CD8-positive, alpha-beta T cell (primary cell): ENCODE measurements at regions of chr4 and their contacts with region 1.

Region 1: DNA sequence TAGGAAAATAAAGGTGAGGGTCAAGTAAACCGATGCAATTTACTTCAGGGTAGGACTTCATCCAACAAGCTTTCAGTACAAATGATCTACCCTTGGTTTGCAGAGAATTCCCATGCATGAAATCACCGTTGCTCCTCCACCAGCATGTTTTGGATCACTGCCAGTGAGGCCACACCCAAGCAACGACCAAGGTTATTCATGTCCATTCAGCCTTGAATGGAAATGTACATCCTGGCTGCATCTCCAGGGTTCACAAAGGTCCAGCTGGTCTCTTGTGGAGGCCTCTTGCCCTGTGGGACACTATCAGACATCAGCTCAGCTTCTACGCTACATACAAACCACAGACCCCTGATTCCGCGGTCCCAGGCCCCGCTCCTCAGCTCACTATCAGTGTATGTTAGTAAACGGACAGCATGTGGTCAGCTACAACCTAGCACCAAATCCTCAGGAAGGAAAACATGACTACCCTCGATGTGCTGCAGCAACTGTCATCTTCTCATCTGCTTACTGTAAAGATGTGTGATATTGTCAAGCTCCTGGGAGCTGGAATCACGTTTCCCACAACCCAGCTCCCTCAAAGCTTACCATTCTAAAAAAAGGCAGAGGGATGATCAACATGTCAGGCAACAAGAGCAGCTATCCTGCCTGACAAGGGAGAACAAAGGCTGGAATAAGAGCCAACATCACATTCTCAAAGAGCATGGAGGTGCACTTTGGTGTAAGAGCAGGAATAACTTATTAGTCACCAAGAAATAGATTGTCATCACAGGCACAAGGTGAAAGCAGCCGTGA is 4.9 kb downstream of the LYAR start:
- DNase-seq: no peak
- ATAC-seq: no peak
- H3K4me3 ChIP-seq: no peak overlapping the region
- H3K4me3 Mint-ChIP-seq: no peak overlapping the region
- H3K27ac ChIP-seq: no peak overlapping the region
- H3K27ac Mint-ChIP-seq: no peak overlapping the region
- H3K4me1 ChIP-seq: peaks cover 19% of the 10 kb centered on the region
- H3K4me1 Mint-ChIP-seq: peaks cover 55% of the 10 kb centered on the region
- H3K27me3 ChIP-seq: no peaks in the 10 kb centered on the region
- H3K27me3 Mint-ChIP-seq: no peaks in the 10 kb centered on the region
- CTCF ChIP-seq: no peak

Region 2: DNA sequence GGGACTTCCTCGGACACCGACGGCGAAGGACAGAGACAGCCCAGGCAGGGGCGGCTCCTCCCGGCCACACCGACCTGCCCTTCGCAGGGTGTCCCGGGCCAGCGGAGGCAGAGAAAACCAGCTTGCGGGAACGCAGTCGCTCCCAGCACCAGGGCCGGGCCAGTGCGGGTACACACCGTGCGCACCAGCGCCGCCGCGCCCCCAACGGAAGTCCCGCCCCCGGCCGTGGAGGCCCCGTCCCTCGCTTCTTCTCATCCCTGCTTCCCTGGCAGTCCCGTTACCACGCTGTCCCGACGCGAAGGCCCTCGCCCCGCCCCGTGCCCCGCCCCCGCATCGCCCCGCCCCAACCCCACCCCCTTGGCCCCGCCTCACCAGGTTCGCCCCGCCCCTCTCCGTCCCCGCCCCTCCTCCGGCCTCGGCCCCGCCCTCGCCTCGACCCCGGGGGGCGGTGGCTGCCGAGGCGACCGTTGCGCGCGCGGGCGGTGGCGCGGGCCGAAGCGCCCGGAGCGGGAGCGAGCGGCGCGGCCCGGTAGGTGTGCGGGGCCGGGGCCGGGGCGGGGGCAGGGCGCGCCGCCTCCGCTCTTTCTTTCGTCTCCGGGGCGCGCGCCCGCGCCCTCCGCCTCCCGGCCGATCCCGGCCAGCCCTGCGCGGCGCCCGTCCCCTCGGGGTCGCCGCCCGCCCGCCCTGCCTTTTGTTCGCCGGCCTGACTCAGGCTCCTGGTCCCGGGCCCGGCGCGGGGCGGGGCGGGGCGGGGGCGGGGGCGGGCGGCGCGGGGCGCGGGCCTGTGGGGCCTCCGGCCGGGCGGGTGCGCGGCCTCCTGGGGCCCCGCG is 992.2 kb before region 1 on chr4 and contains the start of gene RGS12:
- CTCF ChIA-PET with region 1: no interaction called
- POLR2A ChIA-PET with region 1: no interaction called
- intact Hi-C with region 1: no loop called
- DNase-seq: peak; percentile 58 to 89 (median 78)
- ATAC-seq: peak; percentile 82
- H3K4me3 ChIP-seq: peak within 1 kb of the TSS; percentile 67 to 79
- H3K4me3 Mint-ChIP-seq: peak within 1 kb of the TSS; percentile 89
- H3K27ac ChIP-seq: no peak within 1 kb of the TSS
- H3K27ac Mint-ChIP-seq: peak within 1 kb of the TSS; percentile 82
- H3K4me1 ChIP-seq: peaks cover 14% of the 10 kb centered on the region
- H3K4me1 Mint-ChIP-seq: peaks cover 18% of the 10 kb centered on the region
- H3K27me3 ChIP-seq: peaks cover 0 to 4% of the 10 kb centered on the region in 2 experiments
- H3K27me3 Mint-ChIP-seq: peaks cover 20% of the 10 kb centered on the region
- CTCF ChIP-seq: no peak
- total RNA-seq, gene RGS12: 4.4 to 7.6 TPM

Region 3: DNA sequence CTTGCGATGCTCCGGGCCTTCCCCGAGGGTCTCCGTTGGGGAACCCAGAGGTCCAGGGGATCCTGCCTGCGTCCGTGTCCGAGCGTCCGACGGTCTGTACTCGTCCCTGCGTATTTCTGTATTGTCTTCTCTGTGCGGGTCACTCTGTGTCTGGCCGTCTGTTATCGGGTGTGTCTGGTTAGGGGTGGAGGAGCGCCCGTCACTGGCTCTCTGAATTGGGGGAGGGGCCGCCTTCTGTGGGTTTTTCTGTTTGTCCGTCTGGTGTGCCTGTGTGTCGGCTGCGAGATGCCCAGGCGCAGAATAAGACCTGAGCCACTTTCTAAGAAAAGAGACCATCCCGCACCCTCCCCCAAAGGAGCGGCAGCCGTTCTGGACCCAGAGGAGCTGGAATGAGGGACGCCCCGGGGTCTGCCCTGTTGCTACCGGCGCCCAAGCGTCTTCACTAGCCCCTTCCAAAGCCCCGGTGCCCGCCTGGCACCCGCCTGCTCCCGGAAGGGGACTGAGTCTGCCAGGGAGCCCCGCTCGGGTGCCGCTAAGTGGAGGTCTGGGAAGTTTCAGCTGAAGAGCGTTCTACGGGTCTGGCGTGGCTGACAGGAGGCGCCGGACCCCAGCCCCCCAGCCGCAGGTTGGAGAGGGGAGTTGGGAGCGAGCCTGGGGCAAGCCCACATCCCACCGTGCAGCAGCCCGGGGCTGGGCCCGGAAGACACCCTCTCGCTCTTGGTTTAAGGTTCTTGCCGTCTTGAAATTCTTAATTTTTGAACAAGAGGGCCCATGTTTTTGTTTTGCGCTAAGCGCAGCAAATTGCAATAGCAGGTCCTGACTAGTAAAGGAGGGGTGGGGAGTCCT is 57.3 kb before region 1 on chr4:
- CTCF ChIA-PET with region 1: no interaction called
- POLR2A ChIA-PET with region 1: no interaction called
- intact Hi-C with region 1: no loop called
- DNase-seq: no peak
- ATAC-seq: no peak
- H3K4me3 ChIP-seq: no peak overlapping the region
- H3K4me3 Mint-ChIP-seq: no peak overlapping the region
- H3K27ac ChIP-seq: no peak overlapping the region
- H3K27ac Mint-ChIP-seq: no peak overlapping the region
- H3K4me1 ChIP-seq: no peaks in the 10 kb centered on the region
- H3K4me1 Mint-ChIP-seq: peaks cover 14% of the 10 kb centered on the region
- H3K27me3 ChIP-seq: peaks cover 0 to 5% of the 10 kb centered on the region in 2 experiments
- H3K27me3 Mint-ChIP-seq: peaks cover 45% of the 10 kb centered on the region
- CTCF ChIP-seq: no peak

Region 4: DNA sequence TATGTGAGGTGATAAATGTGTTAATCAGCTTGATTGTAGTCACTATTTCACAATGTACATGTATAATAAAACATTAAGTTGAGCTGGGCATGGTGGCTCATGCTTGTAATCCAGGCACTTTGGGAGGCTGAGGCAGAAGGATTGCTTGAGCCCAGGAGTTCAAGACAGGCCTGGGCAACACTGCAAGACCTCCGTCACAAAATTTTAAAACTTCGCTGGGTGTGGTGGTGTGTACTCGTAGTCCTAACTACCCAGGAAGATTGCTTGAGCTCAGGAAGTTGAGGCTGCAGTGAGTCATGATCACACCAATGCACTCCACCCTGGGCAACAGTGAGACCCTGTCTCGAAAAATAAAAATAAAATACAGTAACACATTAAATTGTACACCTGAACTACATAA is 15.2 kb before region 1 on chr4:
- CTCF ChIA-PET with region 1: interaction called, 5 read pairs
- POLR2A ChIA-PET with region 1: interaction called, 12 read pairs
- intact Hi-C with region 1: loop called (anchors 1 to 2 kb)
- DNase-seq: peak in 6 of 9 experiments; percentile 39 to 81 (median 70)
- ATAC-seq: peak; percentile 77
- H3K4me3 ChIP-seq: no peak overlapping the region
- H3K4me3 Mint-ChIP-seq: peak overlapping the region; percentile 77
- H3K27ac ChIP-seq: peak overlapping the region; percentile 81 to 90
- H3K27ac Mint-ChIP-seq: peak overlapping the region; percentile 95
- H3K4me1 ChIP-seq: peaks cover 22% of the 10 kb centered on the region
- H3K4me1 Mint-ChIP-seq: peaks cover 52% of the 10 kb centered on the region
- H3K27me3 ChIP-seq: no peaks in the 10 kb centered on the region
- H3K27me3 Mint-ChIP-seq: no peaks in the 10 kb centered on the region
- CTCF ChIP-seq: no peak

Region 5: DNA sequence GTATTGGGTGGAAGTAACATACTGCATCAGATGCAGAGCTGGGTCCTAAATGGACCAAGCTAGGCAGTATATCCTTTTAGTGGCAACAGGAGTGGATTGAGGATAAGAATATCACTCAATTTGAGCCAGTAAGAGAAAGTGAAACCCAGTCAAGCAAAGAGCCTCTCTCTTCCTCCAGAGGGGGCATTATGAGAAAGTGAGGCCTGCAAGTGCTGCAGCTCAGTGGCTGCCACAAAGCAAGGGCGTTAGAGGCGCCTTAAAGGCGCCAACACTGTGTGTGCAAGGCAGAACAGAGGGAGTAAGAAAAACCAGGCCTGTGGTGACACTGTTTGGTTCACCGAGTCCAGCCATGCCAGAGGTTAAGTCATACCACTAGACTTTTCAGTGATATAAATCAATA is 239.3 kb after region 1 on chr4:
- CTCF ChIA-PET with region 1: no interaction called
- POLR2A ChIA-PET with region 1: no interaction called
- intact Hi-C with region 1: no loop called
- DNase-seq: peak in 7 of 9 experiments; percentile 5 to 79 (median 48)
- ATAC-seq: peak; percentile 98
- H3K4me3 ChIP-seq: no peak overlapping the region
- H3K4me3 Mint-ChIP-seq: peak overlapping the region; percentile 55
- H3K27ac ChIP-seq: peak overlapping the region in 1 of 2 experiments; percentile 46
- H3K27ac Mint-ChIP-seq: peak overlapping the region; percentile 66
- H3K4me1 ChIP-seq: peaks cover 3% of the 10 kb centered on the region
- H3K4me1 Mint-ChIP-seq: peaks cover 51% of the 10 kb centered on the region
- H3K27me3 ChIP-seq: no peaks in the 10 kb centered on the region
- H3K27me3 Mint-ChIP-seq: no peaks in the 10 kb centered on the region
- CTCF ChIP-seq: no peak